ENCODE measurements at regions of chr1 and their contacts with region 1.

Region 1: GRCh38 chr1:103106426-103107341 is 1.6 kb downstream of the COL11A1 start:
- DNase-seq: no peak
- ATAC-seq: no peak
- H3K4me3 ChIP-seq: no peak overlapping the region
- H3K4me3 Mint-ChIP-seq: peak overlapping the region; percentile 28
- H3K27ac ChIP-seq: no peak overlapping the region
- H3K27ac Mint-ChIP-seq: no peak overlapping the region
- H3K4me1 ChIP-seq: peaks cover 5% of the 10 kb centered on the region
- H3K4me1 Mint-ChIP-seq: peaks cover 0 to 16% of the 10 kb centered on the region in 2 donors
- H3K27me3 ChIP-seq: peaks cover 8% of the 10 kb centered on the region
- H3K27me3 Mint-ChIP-seq: peaks cover 9 to 15% of the 10 kb centered on the region in 2 donors
- CTCF ChIP-seq: no peak

Region 2: DNA sequence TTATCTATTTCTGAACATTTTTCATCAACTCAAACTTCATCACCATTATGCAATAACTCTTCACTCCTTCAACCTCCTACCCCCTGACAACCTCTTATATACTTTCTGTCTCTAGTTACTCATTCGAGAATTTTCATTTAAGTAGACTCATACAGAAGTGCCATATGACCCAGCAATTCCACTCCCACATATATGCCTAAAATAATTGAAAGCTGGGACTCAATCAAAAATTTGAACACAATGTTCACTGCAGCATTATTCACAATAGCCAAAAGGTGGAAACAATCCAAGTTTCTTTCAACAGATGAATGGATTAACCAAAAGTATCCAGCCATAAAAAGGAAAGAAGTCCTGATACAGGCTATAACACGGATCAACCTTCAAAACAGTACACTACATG is 22.5 kb before region 1 on chr1:
- intact Hi-C with region 1: no loop called
- DNase-seq: no peak
- ATAC-seq: no peak
- H3K4me3 ChIP-seq: no peak overlapping the region
- H3K4me3 Mint-ChIP-seq: no peak overlapping the region
- H3K27ac ChIP-seq: no peak overlapping the region
- H3K27ac Mint-ChIP-seq: no peak overlapping the region
- H3K4me1 ChIP-seq: no peaks in the 10 kb centered on the region
- H3K4me1 Mint-ChIP-seq: no peaks in the 10 kb centered on the region
- H3K27me3 ChIP-seq: no peaks in the 10 kb centered on the region
- H3K27me3 Mint-ChIP-seq: no peaks in the 10 kb centered on the region
- CTCF ChIP-seq: no peak

Region 3: DNA sequence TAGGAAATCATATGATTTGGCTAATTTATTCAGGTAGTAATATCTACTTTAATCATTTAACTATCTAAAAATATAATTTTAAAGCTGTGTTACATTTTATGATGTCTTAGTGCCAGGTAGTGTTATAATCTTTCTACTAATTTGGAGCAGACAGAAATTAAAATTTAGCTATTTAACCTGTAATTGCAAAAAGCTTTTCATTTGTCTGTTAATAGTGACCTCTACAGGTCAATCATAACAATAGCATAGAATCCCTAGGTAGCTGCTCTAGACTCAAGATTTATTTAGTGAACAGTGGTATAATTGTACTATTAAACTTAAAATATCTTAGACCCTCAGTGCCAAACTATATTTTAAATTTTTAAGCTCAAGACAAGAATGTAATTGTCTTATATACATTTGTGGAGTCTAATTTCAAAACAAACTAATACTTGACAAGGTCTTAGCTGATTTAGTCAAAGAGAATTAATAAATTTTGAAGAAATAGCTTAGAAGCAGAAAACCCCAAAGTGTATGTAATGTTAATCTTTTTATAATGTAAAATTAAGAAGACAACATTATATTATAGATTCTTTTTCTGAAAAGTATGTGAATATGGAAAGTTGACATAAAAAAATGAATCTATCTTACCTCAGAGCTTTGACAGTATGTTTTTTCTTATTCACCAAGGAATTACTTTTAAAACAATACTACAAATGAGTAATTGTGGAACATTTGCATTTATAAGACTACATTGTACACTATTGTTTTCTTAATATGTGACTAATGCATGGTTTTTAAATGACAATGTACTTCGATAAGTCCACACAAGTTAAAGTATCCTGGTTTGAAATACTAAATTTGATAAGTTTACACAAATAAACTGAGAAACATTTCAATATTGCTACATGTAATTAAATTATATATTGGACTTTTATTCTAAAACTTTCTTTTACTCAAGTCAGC is 354.7 kb after region 1 on chr1:
- intact Hi-C with region 1: loop called (anchors 5 kb)
- DNase-seq: no peak
- ATAC-seq: no peak
- H3K4me3 ChIP-seq: no peak overlapping the region
- H3K4me3 Mint-ChIP-seq: no peak overlapping the region
- H3K27ac ChIP-seq: no peak overlapping the region
- H3K27ac Mint-ChIP-seq: no peak overlapping the region
- H3K4me1 ChIP-seq: no peaks in the 10 kb centered on the region
- H3K4me1 Mint-ChIP-seq: no peaks in the 10 kb centered on the region
- H3K27me3 ChIP-seq: no peaks in the 10 kb centered on the region
- H3K27me3 Mint-ChIP-seq: no peaks in the 10 kb centered on the region
- CTCF ChIP-seq: peak; percentile 44

Region 4: GRCh38 chr1:103514920-103515503 is 408.3 kb after region 1 on chr1:
- intact Hi-C with region 1: loop called (anchors 2 kb)
- DNase-seq: peak in 1 of 2 donors; percentile 72
- ATAC-seq: peak; percentile 71 to 96 (median 89)
- H3K4me3 ChIP-seq: no peak overlapping the region
- H3K4me3 Mint-ChIP-seq: no peak overlapping the region
- H3K27ac ChIP-seq: no peak overlapping the region
- H3K27ac Mint-ChIP-seq: no peak overlapping the region
- H3K4me1 ChIP-seq: no peaks in the 10 kb centered on the region
- H3K4me1 Mint-ChIP-seq: no peaks in the 10 kb centered on the region
- H3K27me3 ChIP-seq: no peaks in the 10 kb centered on the region
- H3K27me3 Mint-ChIP-seq: no peaks in the 10 kb centered on the region
- CTCF ChIP-seq: peak; percentile 77